CD8-positive, alpha-beta T cell (primary cell): ENCODE measurements at regions of chr7 and their contacts with region 1.

Region 1: GRCh38 chr7:1940402-1940786 is 270.3 kb downstream of the ELFN1 start:
- DNase-seq: peak; percentile 84 to 98 (median 90)
- ATAC-seq: peak; percentile 87
- H3K4me3 ChIP-seq: peak overlapping the region; percentile 65 to 90
- H3K4me3 Mint-ChIP-seq: peak overlapping the region; percentile 94
- H3K27ac ChIP-seq: peak overlapping the region; percentile 88 to 95
- H3K27ac Mint-ChIP-seq: peak overlapping the region; percentile 98
- H3K4me1 ChIP-seq: peaks cover 65% of the 10 kb centered on the region
- H3K4me1 Mint-ChIP-seq: peaks cover 67% of the 10 kb centered on the region
- H3K27me3 ChIP-seq: no peaks in the 10 kb centered on the region
- H3K27me3 Mint-ChIP-seq: no peaks in the 10 kb centered on the region
- CTCF ChIP-seq: no peak

Region 2: GRCh38 chr7:1925349-1925748 is 15.0 kb before region 1 on chr7:
- CTCF ChIA-PET with region 1: no interaction called
- POLR2A ChIA-PET with region 1: interaction called, 34 read pairs
- intact Hi-C with region 1: loop called (anchors 1 kb)
- DNase-seq: peak in 3 of 9 experiments; percentile 28 to 38 (median 36)
- ATAC-seq: no peak
- H3K4me3 ChIP-seq: no peak overlapping the region
- H3K4me3 Mint-ChIP-seq: peak overlapping the region; percentile 64
- H3K27ac ChIP-seq: peak overlapping the region; percentile 51 to 56
- H3K27ac Mint-ChIP-seq: peak overlapping the region; percentile 89
- H3K4me1 ChIP-seq: peaks cover 82% of the 10 kb centered on the region
- H3K4me1 Mint-ChIP-seq: peaks cover 77% of the 10 kb centered on the region
- H3K27me3 ChIP-seq: no peaks in the 10 kb centered on the region
- H3K27me3 Mint-ChIP-seq: no peaks in the 10 kb centered on the region
- CTCF ChIP-seq: no peak

Region 3: DNA sequence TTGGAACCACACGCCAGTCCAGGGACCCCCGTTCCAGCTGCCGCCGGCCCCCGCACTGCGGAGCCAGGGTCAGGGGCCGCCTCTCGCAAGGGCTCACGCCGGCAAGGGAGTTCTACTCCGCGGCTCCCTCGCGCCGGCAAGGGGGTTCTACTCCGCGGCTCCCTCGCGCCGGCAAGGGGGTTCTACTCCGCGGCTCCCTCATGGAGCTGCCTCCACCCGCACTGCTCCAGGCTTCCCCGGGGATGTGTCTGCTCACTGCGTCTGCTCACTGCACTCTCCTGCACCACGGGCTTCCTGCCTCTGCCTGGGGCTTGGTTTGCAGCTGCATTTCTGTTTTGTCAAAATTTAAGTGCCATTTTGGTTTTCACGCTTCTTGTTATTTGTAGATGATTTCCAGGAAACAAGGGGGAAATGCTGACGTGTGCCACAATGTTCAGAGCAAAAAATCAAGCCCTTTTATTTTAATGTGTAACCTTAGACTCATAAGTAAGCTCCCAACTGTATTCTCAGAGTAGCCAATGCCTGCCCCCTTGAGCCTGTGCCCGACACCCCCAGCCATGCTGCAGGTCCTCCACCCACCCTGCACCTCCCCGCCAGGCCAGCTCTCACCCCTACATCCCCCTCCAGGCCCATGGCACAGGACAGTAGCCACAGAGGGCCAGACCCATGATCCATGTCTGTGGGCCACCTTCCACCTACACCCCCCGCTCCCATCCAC is 46.1 kb after region 1 on chr7:
- CTCF ChIA-PET with region 1: no interaction called
- POLR2A ChIA-PET with region 1: interaction called, 5 read pairs
- intact Hi-C with region 1: loop called in 1 of 2 experiments (anchors 2 kb)
- DNase-seq: peak in 7 of 9 experiments; percentile 21 to 78 (median 60)
- ATAC-seq: peak; percentile 82
- H3K4me3 ChIP-seq: peak overlapping the region in 1 of 2 experiments; percentile 42
- H3K4me3 Mint-ChIP-seq: peak overlapping the region; percentile 68
- H3K27ac ChIP-seq: peak overlapping the region; percentile 63 to 74
- H3K27ac Mint-ChIP-seq: peak overlapping the region; percentile 95
- H3K4me1 ChIP-seq: peaks cover 31% of the 10 kb centered on the region
- H3K4me1 Mint-ChIP-seq: peaks cover 35% of the 10 kb centered on the region
- H3K27me3 ChIP-seq: no peaks in the 10 kb centered on the region
- H3K27me3 Mint-ChIP-seq: no peaks in the 10 kb centered on the region
- CTCF ChIP-seq: no peak

Region 4: GRCh38 chr7:2037808-2038522 is 97.6 kb after region 1 on chr7:
- CTCF ChIA-PET with region 1: no interaction called
- POLR2A ChIA-PET with region 1: no interaction called
- intact Hi-C with region 1: loop called (anchors 1 to 5 kb)
- DNase-seq: peak in 4 of 9 experiments; percentile 30 to 71 (median 54)
- ATAC-seq: peak; percentile 36
- H3K4me3 ChIP-seq: peak overlapping the region; percentile 49 to 70
- H3K4me3 Mint-ChIP-seq: peak overlapping the region; percentile 89
- H3K27ac ChIP-seq: peak overlapping the region; percentile 55 to 66
- H3K27ac Mint-ChIP-seq: peak overlapping the region; percentile 97
- H3K4me1 ChIP-seq: peaks cover 38% of the 10 kb centered on the region
- H3K4me1 Mint-ChIP-seq: peaks cover 60% of the 10 kb centered on the region
- H3K27me3 ChIP-seq: no peaks in the 10 kb centered on the region
- H3K27me3 Mint-ChIP-seq: no peaks in the 10 kb centered on the region
- CTCF ChIP-seq: no peak

Region 5: GRCh38 chr7:2508327-2509215 is 568.2 kb after region 1 on chr7:
- CTCF ChIA-PET with region 1: no interaction called
- POLR2A ChIA-PET with region 1: no interaction called
- intact Hi-C with region 1: loop called in 1 of 2 experiments (anchors 10 kb)
- DNase-seq: peak; percentile 56 to 95 (median 84)
- ATAC-seq: peak; percentile 67
- H3K4me3 ChIP-seq: peak overlapping the region; percentile 27 to 47
- H3K4me3 Mint-ChIP-seq: peak overlapping the region; percentile 74
- H3K27ac ChIP-seq: peak overlapping the region; percentile 84 to 88
- H3K27ac Mint-ChIP-seq: peak overlapping the region; percentile 97
- H3K4me1 ChIP-seq: peaks cover 67% of the 10 kb centered on the region
- H3K4me1 Mint-ChIP-seq: peaks cover 64% of the 10 kb centered on the region
- H3K27me3 ChIP-seq: no peaks in the 10 kb centered on the region
- H3K27me3 Mint-ChIP-seq: no peaks in the 10 kb centered on the region
- CTCF ChIP-seq: no peak